ENCODE measurements at regions of chr6 and their contacts with region 1.

Region 1: DNA sequence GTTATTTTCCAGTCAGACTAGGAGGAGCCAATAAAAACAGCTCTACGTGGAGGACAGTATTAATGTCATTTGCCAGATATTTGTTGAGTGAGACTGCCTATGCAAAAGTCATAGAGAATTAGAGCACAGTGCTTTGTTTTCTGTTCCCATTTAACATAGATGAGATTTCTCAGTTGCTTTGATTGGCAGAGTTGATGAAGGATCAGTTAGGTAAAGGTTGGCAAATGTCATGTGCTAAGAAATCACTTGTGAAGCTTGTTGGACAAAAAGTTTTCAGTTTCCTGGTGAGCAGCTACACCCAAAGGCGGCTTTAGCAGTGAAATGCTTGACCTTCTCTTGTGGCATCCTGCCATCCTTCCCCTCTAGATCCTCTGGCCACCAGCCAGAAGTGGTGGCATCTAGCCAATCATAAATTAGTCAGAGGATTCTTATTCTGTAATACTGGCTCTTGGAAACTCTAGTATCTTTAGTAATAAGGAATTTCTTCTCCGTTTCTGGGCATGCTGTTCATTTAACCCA is 37.0 kb downstream of the BCKDHB start:
- DNase-seq: peak; percentile 98
- H3K4me3 Mint-ChIP-seq: peak overlapping the region; percentile 14
- H3K27ac Mint-ChIP-seq: peak overlapping the region; percentile 61
- H3K4me1 Mint-ChIP-seq: peaks cover 10% of the 10 kb centered on the region
- H3K27me3 Mint-ChIP-seq: no peaks in the 10 kb centered on the region
- CTCF ChIP-seq: no peak

Region 2: GRCh38 chr6:80106418-80107235 is 36.9 kb before region 1 on chr6 and contains the start of gene BCKDHB:
- CTCF ChIA-PET with region 1: no interaction called
- POLR2A ChIA-PET with region 1: interaction called, 10 read pairs
- intact Hi-C with region 1: no loop called
- DNase-seq: peak; percentile 100
- H3K4me3 Mint-ChIP-seq: peak within 1 kb of the TSS; percentile 96
- H3K27ac Mint-ChIP-seq: peak within 1 kb of the TSS; percentile 16
- H3K4me1 Mint-ChIP-seq: peaks cover 10% of the 10 kb centered on the region
- H3K27me3 Mint-ChIP-seq: peaks cover 11% of the 10 kb centered on the region
- CTCF ChIP-seq: no peak
- total RNA-seq, gene BCKDHB: 14.5 and 17.7 TPM in 2 replicates

Region 3: GRCh38 chr6:80133020-80133419 is 10.5 kb before region 1 on chr6:
- CTCF ChIA-PET with region 1: interaction called, 13 read pairs
- POLR2A ChIA-PET with region 1: interaction called, 3 read pairs
- intact Hi-C with region 1: no loop called
- DNase-seq: peak; percentile 75
- H3K4me3 Mint-ChIP-seq: no peak overlapping the region
- H3K27ac Mint-ChIP-seq: no peak overlapping the region
- H3K4me1 Mint-ChIP-seq: peaks cover 18% of the 10 kb centered on the region
- H3K27me3 Mint-ChIP-seq: no peaks in the 10 kb centered on the region
- CTCF ChIP-seq: peak; percentile 70

Region 4: DNA sequence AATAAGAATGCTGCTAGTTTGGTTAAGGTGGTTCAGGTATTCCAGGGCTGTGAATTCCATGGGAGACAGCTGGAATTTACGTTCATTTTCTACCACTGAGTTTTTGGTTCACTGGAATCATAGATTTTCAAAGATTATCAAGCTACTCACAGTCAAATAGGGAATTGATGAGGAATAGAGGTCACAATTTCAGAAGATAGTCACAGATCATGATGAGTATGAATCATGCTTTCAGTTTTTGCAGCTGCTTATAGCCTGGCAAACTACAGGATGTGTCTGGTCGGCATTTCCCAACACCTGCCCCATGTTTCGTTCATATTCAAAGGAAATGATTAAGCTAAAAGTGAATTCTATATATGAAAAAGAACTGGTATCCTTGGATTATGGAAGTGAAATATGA is 21.7 kb after region 1 on chr6:
- CTCF ChIA-PET with region 1: interaction called, 5 read pairs
- POLR2A ChIA-PET with region 1: interaction called, 10 read pairs
- intact Hi-C with region 1: no loop called
- DNase-seq: peak; percentile 83
- H3K4me3 Mint-ChIP-seq: peak overlapping the region; percentile 6
- H3K27ac Mint-ChIP-seq: no peak overlapping the region
- H3K4me1 Mint-ChIP-seq: no peaks in the 10 kb centered on the region
- H3K27me3 Mint-ChIP-seq: no peaks in the 10 kb centered on the region
- CTCF ChIP-seq: no peak

Region 5: GRCh38 chr6:80348263-80348662 is 204.8 kb after region 1 on chr6:
- CTCF ChIA-PET with region 1: no interaction called
- POLR2A ChIA-PET with region 1: no interaction called
- intact Hi-C with region 1: no loop called
- DNase-seq: peak; percentile 44
- H3K4me3 Mint-ChIP-seq: no peak overlapping the region
- H3K27ac Mint-ChIP-seq: no peak overlapping the region
- H3K4me1 Mint-ChIP-seq: peaks cover 4% of the 10 kb centered on the region
- H3K27me3 Mint-ChIP-seq: no peaks in the 10 kb centered on the region
- CTCF ChIP-seq: no peak

Region 6: GRCh38 chr6:80541181-80541580 is 397.7 kb after region 1 on chr6:
- CTCF ChIA-PET with region 1: interaction called, 3 read pairs
- POLR2A ChIA-PET with region 1: no interaction called
- intact Hi-C with region 1: loop called (anchors 10 kb)
- DNase-seq: peak; percentile 94
- H3K4me3 Mint-ChIP-seq: peak overlapping the region; percentile 32
- H3K27ac Mint-ChIP-seq: peak overlapping the region; percentile 68
- H3K4me1 Mint-ChIP-seq: peaks cover 86% of the 10 kb centered on the region
- H3K27me3 Mint-ChIP-seq: no peaks in the 10 kb centered on the region
- CTCF ChIP-seq: no peak

Measured in MCF 10A (cell line).